Gastrocnemius medialis (tissue), 4 donors: ENCODE measurements at regions of chr6 and their contacts with region 1.

Region 1: GRCh38 chr6:11653028-11653583 is 115.6 kb downstream of the TMEM170B start:
- DNase-seq: no peak
- ATAC-seq: peak in 1 of 2 donors; percentile 29
- H3K4me3 ChIP-seq: no peak overlapping the region
- H3K27ac ChIP-seq: peak overlapping the region in 2 of 4 donors; percentile 43 to 46
- H3K4me1 ChIP-seq: peaks cover 0 to 22% of the 10 kb centered on the region in 2 donors
- H3K27me3 ChIP-seq: no peaks in the 10 kb centered on the region
- CTCF ChIP-seq: no peak
- POLR2A ChIP-seq: no peak

Region 2: GRCh38 chr6:11514672-11515071 is 138.4 kb before region 1 on chr6:
- in situ Hi-C with region 1: no loop called
- intact Hi-C with region 1: no loop called
- DNase-seq: no peak
- ATAC-seq: no peak
- H3K4me3 ChIP-seq: no peak overlapping the region
- H3K27ac ChIP-seq: no peak overlapping the region
- H3K4me1 ChIP-seq: no peaks in the 10 kb centered on the region
- H3K27me3 ChIP-seq: peaks cover 0 to 8% (median 2%) of the 10 kb centered on the region in 3 donors
- CTCF ChIP-seq: no peak
- POLR2A ChIP-seq: no peak

Region 3: GRCh38 chr6:11585426-11586016 is 67.6 kb before region 1 on chr6:
- in situ Hi-C with region 1: no loop called
- intact Hi-C with region 1: loop called (anchors 5 kb)
- DNase-seq: no peak
- ATAC-seq: no peak
- H3K4me3 ChIP-seq: no peak overlapping the region
- H3K27ac ChIP-seq: no peak overlapping the region
- H3K4me1 ChIP-seq: peaks cover 0 to 8% of the 10 kb centered on the region in 2 donors
- H3K27me3 ChIP-seq: no peaks in the 10 kb centered on the region
- CTCF ChIP-seq: peak in 4 of 5 experiments; percentile 32 to 50 (median 42)
- POLR2A ChIP-seq: no peak

Region 4: DNA sequence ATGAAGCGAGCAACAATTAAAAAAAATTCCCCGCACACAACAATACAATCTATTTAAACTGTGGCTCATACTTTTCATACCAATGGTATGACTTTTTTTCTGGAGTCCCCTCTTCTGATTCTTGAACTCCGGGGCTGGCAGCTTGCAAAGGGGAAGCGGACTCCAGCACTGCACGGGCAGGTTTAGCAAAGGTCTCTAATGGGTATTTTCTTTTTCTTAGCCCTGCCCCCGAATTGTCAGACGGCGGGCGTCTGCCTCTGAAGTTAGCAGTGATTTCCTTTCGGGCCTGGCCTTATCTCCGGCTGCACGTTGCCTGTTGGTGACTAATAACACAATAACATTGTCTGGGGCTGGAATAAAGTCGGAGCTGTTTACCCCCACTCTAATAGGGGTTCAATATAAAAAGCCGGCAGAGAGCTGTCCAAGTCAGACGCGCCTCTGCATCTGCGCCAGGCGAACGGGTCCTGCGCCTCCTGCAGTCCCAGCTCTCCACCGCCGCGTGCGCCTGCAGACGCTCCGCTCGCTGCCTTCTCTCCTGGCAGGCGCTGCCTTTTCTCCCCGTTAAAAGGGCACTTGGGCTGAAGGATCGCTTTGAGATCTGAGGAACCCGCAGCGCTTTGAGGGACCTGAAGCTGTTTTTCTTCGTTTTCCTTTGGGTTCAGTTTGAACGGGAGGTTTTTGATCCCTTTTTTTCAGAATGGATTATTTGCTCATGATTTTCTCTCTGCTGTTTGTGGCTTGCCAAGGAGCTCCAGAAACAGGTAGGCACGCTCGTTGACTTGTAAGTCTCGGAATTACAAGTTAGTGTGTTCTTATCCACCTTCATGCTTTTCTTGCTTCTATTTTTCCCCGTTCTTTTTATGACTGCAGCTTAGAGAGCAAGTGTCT is 637.1 kb after region 1 on chr6 and contains the start of gene EDN1:
- in situ Hi-C with region 1: no loop called
- intact Hi-C with region 1: loop called (anchors 10 kb)
- DNase-seq: peak; percentile 25 to 26
- ATAC-seq: peak; percentile 62 to 72
- H3K4me3 ChIP-seq: peak within 1 kb of the TSS; percentile 46 to 61 (median 56)
- H3K27ac ChIP-seq: peak within 1 kb of the TSS in 3 of 4 donors; percentile 55 to 73 (median 57)
- H3K4me1 ChIP-seq: peaks cover 3 to 7% of the 10 kb centered on the region in 2 donors
- H3K27me3 ChIP-seq: peaks cover 7 to 14% (median 12%) of the 10 kb centered on the region in 3 donors
- CTCF ChIP-seq: peak in 2 of 5 experiments; percentile 28 to 58
- POLR2A ChIP-seq: peak; percentile 37 to 48
- total RNA-seq, gene EDN1: 7.4 to 12.0 (median 9.3) TPM

Region 5: GRCh38 chr6:12605888-12606345 is 952.8 kb after region 1 on chr6:
- in situ Hi-C with region 1: loop called in 3 of 4 experiments (anchors 10 to 25 kb)
- intact Hi-C with region 1: loop called (anchors 1 kb)
- DNase-seq: peak in 1 of 2 donors; percentile 15
- ATAC-seq: peak in 1 of 2 donors; percentile 69
- H3K4me3 ChIP-seq: no peak overlapping the region
- H3K27ac ChIP-seq: no peak overlapping the region
- H3K4me1 ChIP-seq: no peaks in the 10 kb centered on the region
- H3K27me3 ChIP-seq: no peaks in the 10 kb centered on the region
- CTCF ChIP-seq: peak in 4 of 5 experiments; percentile 6 to 62 (median 50)
- POLR2A ChIP-seq: no peak

Region 6: DNA sequence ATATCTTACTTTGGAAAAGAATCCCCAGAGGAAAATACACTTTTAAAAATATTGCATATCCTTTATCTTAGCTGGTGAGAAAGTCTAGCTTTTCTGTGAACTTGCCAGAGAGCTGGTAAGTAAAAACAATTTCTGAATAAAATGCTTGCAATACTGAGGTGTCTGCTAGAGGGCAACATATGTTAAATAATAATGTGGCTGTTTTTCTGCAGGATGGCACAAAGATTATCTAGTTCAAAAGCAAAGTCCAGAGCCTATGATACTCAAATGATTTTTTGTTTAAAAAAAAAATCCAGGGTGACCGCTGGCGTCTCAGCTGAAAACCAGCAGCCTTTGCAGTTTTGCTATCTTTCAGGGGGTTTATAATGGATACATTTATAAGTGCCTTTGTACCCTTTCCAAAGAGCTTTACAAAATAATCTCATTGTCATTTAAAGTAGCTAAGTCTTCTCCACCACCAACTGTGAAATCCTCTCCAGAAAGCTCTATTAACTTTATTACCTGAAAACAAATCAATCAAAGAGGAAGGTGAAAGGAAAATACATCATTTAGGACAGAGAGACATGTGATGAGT is 1258.4 kb after region 1 on chr6:
- in situ Hi-C with region 1: loop called in 1 of 4 experiments (anchors 25 kb)
- intact Hi-C with region 1: no loop called
- DNase-seq: no peak
- ATAC-seq: no peak
- H3K4me3 ChIP-seq: no peak overlapping the region
- H3K27ac ChIP-seq: no peak overlapping the region
- H3K4me1 ChIP-seq: no peaks in the 10 kb centered on the region
- H3K27me3 ChIP-seq: no peaks in the 10 kb centered on the region
- CTCF ChIP-seq: peak in 2 of 5 experiments; percentile 19 to 34
- POLR2A ChIP-seq: no peak